ENCODE measurements at regions of chr2 and their contacts with region 1.

Region 1: GRCh38 chr2:102240640-102241370 is 54.0 kb downstream of the IL1RL2 start:
- DNase-seq: peak; percentile 94
- ATAC-seq: peak; percentile 94
- H3K4me3 Mint-ChIP-seq: peak overlapping the region; percentile 15
- H3K27ac Mint-ChIP-seq: peak overlapping the region; percentile 84
- H3K4me1 Mint-ChIP-seq: peaks cover 42% of the 10 kb centered on the region
- H3K27me3 Mint-ChIP-seq: no peaks in the 10 kb centered on the region

Region 2: GRCh38 chr2:101998896-101999789 is 241.7 kb before region 1 on chr2:
- CTCF ChIA-PET with region 1: interaction called, 68 read pairs
- POLR2A ChIA-PET with region 1: interaction called, 4 read pairs
- intact Hi-C with region 1: no loop called
- DNase-seq: peak; percentile 69
- ATAC-seq: peak; percentile 70
- H3K4me3 Mint-ChIP-seq: peak overlapping the region; percentile 64
- H3K27ac Mint-ChIP-seq: peak overlapping the region; percentile 90
- H3K4me1 Mint-ChIP-seq: peaks cover 40% of the 10 kb centered on the region
- H3K27me3 Mint-ChIP-seq: peaks cover 3% of the 10 kb centered on the region

Region 3: DNA sequence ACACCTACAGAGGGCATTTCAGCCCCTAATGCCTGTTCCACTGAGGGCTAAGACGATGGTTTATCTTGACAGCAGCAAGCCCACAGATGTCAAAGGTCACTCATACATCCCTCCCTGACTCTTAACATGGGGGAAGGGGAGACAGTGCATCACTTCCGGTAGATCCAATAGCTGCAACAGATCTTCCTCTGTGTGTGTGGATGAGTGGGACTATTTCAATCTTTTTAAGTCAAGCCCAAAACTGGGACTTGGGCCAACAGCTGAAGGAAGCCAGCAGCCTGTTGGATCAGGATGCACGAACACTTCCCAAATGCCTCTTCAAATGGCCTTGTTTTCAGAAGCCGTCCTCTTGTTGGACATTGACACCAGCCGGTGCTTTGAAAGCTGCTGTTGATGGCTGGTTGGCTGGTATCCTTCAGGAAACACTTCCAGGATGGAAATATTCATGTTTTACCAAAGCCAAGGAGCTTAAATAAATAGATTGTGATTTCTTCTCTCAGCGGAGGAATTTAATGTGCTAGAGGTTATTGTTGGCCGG is 189.9 kb before region 1 on chr2:
- CTCF ChIA-PET with region 1: interaction called, 12 read pairs
- POLR2A ChIA-PET with region 1: no interaction called
- intact Hi-C with region 1: no loop called
- DNase-seq: no peak
- ATAC-seq: no peak
- H3K4me3 Mint-ChIP-seq: no peak overlapping the region
- H3K27ac Mint-ChIP-seq: no peak overlapping the region
- H3K4me1 Mint-ChIP-seq: peaks cover 12% of the 10 kb centered on the region
- H3K27me3 Mint-ChIP-seq: peaks cover 11% of the 10 kb centered on the region

Region 4: GRCh38 chr2:102122110-102122509 is 118.7 kb before region 1 on chr2:
- CTCF ChIA-PET with region 1: interaction called, 10 read pairs
- POLR2A ChIA-PET with region 1: no interaction called
- intact Hi-C with region 1: no loop called
- DNase-seq: no peak
- ATAC-seq: peak; percentile 30
- H3K4me3 Mint-ChIP-seq: no peak overlapping the region
- H3K27ac Mint-ChIP-seq: no peak overlapping the region
- H3K4me1 Mint-ChIP-seq: peaks cover 41% of the 10 kb centered on the region
- H3K27me3 Mint-ChIP-seq: peaks cover 17% of the 10 kb centered on the region

Region 5: DNA sequence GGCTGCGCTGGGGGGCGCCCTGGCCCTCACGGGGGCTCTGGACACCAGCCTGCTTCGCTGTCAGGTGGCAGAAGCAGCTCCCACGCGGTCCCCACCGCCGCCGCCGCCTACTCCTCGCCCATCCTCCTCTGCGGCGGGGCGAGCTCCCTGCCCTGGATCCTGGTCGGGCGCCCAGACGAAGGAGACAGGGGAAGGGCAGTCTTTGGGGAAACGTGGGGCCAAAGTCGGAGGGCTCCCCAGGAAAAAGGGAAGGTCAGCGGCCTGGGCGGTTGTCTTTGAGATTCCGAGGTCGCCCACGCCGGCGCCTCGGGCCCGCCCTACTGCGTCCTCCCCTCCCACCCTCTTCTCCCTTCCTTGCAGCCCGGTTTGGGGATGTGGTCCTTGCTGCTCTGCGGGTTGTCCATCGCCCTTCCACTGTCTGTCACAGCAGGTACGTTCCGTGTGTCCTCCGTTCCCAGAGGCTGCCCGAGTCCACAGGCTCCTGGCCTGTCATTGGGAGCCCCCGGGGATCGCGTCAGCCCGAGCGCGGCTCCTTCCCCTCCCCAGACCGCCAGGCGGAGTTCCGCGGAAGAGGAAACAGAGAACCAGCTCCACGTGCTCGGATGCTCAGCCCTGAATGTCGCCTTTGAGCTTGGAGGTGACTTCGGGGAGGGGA is 53.2 kb before region 1 on chr2:
- CTCF ChIA-PET with region 1: interaction called, 12 read pairs
- POLR2A ChIA-PET with region 1: no interaction called
- intact Hi-C with region 1: loop called (anchors 2 kb)
- DNase-seq: peak; percentile 70
- ATAC-seq: peak; percentile 76
- H3K4me3 Mint-ChIP-seq: peak overlapping the region; percentile 65
- H3K27ac Mint-ChIP-seq: peak overlapping the region; percentile 90
- H3K4me1 Mint-ChIP-seq: peaks cover 24% of the 10 kb centered on the region
- H3K27me3 Mint-ChIP-seq: peaks cover 8% of the 10 kb centered on the region

Region 6: GRCh38 chr2:102350137-102350793 is 109.5 kb after region 1 on chr2:
- CTCF ChIA-PET with region 1: interaction called, 12 read pairs
- POLR2A ChIA-PET with region 1: no interaction called
- intact Hi-C with region 1: no loop called
- DNase-seq: peak; percentile 45
- ATAC-seq: peak; percentile 79
- H3K4me3 Mint-ChIP-seq: no peak overlapping the region
- H3K27ac Mint-ChIP-seq: no peak overlapping the region
- H3K4me1 Mint-ChIP-seq: no peaks in the 10 kb centered on the region
- H3K27me3 Mint-ChIP-seq: peaks cover 2% of the 10 kb centered on the region

Measured in activated CD4-positive, alpha-beta T cell treated with anti-CD3 and anti-CD28 coated beads for 36 hours (primary cell).